HepG2 (cell line): ENCODE measurements at regions of chr1 and their contacts with region 1.

Region 1: GRCh38 chr1:110203021-110203661 is 7.0 kb upstream of the KCNC4 start:
- DNase-seq: peak; percentile 50
- ATAC-seq: peak; percentile 50
- H3K4me3 ChIP-seq: no peak overlapping the region
- H3K27ac ChIP-seq: no peak overlapping the region
- H3K4me1 ChIP-seq: no peaks in the 10 kb centered on the region
- H3K27me3 ChIP-seq: peaks cover 3 to 30% of the 10 kb centered on the region in 2 experiments; a peak in 3 of 5 replicates
- CTCF ChIP-seq: peak; percentile 87
- EP300 ChIP-seq: no peak
- POLR2A ChIP-seq: no peak
- RAD21 ChIP-seq: peak; percentile 49; the same call in 1 of the 2 replicates

Region 2: DNA sequence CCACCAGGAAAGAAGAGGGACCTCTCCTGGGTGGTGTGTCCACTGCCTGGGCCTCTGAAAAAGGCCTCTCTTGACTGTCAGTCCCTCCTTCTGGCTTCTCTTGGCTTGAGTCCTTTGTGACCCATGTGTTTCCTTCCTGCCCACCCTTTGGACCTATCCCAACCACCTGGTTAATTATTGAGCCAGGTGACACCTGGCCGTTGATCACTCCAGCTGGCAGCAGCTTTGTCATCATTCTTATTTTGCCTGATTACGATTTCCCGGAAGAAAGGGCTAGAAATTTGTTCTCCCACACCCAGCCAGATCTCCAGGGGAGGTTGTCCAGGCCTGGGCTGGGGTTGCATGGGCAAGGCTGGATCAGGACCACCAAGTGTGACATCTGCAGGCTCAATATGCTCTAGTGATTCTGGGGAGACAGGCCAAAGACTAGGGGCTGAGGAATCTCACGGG is 267.7 kb before region 1 on chr1:
- CTCF ChIA-PET with region 1: no interaction called
- POLR2A ChIA-PET with region 1: no interaction called
- in situ Hi-C with region 1: no loop called
- intact Hi-C with region 1: no loop called
- DNase-seq: peak; percentile 71
- ATAC-seq: peak; percentile 65
- H3K4me3 ChIP-seq: peak overlapping the region; percentile 9 to 56 (median 10); a peak in 3 of 6 replicates
- H3K27ac ChIP-seq: peak overlapping the region; percentile 76
- H3K4me1 ChIP-seq: peaks cover 64% of the 10 kb centered on the region
- H3K27me3 ChIP-seq: no peaks in the 10 kb centered on the region
- CTCF ChIP-seq: peak; percentile 28; the same call in 1 of the 2 replicates
- EP300 ChIP-seq: peak in 1 of 2 experiments; percentile 63; a peak in 2 of 4 replicates
- POLR2A ChIP-seq: peak; percentile 55 to 60; a peak in 2 of 4 replicates
- RAD21 ChIP-seq: no peak

Region 3: DNA sequence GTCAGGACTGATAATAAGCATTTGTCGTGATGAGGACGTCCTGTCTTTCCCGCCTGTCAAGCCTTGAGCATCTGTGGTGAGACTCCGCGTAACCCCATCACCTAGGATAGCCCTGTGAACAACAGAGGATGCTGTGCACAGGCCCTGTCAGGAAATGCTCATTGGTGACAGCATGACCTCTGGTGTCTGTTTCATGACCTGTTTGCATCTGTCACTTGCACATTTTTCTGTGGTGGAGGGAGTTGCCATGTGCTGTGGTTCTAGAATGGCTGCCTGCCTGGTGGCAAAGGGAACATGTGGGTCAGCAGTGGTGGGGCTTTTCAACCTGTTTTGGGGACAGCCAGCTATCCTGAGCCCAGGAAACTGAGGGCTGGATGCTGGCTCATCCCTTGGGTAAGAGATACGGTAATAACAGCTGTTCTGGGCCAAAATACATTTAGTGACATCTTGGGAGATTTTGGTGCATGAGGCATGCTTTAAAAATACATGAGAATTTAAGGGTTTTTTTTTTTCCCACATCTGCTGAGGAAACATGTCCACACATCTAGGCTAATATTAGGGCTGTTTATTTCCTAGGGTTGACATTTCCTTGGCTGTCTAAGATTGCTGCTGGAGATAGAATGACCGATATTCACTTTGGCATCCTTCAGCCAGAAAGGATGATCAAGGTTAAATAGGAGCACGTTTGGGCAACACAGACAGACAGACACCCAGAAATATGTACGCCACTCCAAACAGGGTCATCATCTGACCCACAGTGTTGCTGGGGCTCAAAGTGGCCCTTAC is 59.9 kb after region 1 on chr1:
- CTCF ChIA-PET with region 1: no interaction called
- POLR2A ChIA-PET with region 1: no interaction called
- in situ Hi-C with region 1: no loop called
- intact Hi-C with region 1: no loop called
- DNase-seq: no peak
- ATAC-seq: no peak
- H3K4me3 ChIP-seq: no peak overlapping the region
- H3K27ac ChIP-seq: no peak overlapping the region
- H3K4me1 ChIP-seq: no peaks in the 10 kb centered on the region
- H3K27me3 ChIP-seq: peaks cover 0 to 36% of the 10 kb centered on the region in 2 experiments; a peak in 3 of 5 replicates
- CTCF ChIP-seq: no peak
- EP300 ChIP-seq: no peak
- POLR2A ChIP-seq: no peak
- RAD21 ChIP-seq: no peak

Region 4: DNA sequence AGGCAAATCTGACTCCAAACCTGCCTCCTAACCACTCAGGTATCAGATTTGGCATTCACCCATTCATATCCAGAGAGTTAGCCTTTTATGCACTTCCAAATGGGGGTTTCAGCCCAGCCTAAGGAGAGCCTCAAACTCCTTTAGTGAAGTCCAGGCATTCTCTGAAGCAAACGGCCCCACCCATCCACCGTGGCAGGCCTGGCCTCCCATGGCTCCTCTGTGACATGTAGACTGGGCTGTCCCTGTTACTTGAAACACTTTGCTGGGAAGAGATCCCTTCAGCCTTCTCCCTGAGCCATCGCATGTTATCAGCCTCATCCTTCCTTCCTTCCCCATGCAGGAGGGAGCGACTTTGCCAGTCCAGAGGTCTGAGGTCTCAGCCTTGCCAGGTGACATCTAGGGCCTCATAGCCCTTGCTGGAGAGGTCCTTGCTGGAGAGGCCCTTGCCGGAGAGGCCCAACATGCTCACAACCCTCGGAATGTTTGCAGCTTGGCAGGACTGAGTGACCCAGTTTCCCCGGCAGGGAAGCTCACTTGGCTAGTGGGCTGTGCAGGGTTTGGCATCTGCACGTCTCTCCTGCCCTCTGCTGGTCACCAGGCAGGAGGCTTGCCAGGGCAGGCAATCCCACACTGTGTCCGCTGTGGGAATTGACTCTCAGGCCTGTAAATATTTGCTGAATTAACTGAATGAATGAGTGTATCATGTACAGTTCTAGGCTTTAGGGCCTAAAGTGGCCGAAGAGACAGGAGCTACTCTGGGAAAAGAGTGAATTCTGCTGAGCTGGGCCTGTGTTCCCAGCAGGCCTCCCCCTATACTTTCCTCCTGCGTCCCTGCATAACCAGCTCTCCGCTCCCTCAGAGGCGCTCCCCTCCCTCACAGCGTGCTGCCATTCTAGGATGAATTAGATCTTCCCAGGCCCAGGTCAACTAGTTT is 109.3 kb after region 1 on chr1:
- CTCF ChIA-PET with region 1: interaction called, 57 read pairs
- POLR2A ChIA-PET with region 1: interaction called, 3 read pairs
- in situ Hi-C with region 1: loop called (anchors 5 kb)
- intact Hi-C with region 1: loop called (anchors 1 kb)
- DNase-seq: peak; percentile 59
- ATAC-seq: peak; percentile 99
- H3K4me3 ChIP-seq: peak overlapping the region in 1 of 3 experiments; percentile 4; a peak in 1 of 6 replicates
- H3K27ac ChIP-seq: no peak overlapping the region
- H3K4me1 ChIP-seq: peaks cover 8% of the 10 kb centered on the region; the same call in 1 of the 2 replicates
- H3K27me3 ChIP-seq: peaks cover 0 to 5% of the 10 kb centered on the region in 2 experiments; a peak in 2 of 5 replicates
- CTCF ChIP-seq: peak; percentile 97
- EP300 ChIP-seq: no peak
- POLR2A ChIP-seq: no peak
- RAD21 ChIP-seq: peak; percentile 94

Region 5: DNA sequence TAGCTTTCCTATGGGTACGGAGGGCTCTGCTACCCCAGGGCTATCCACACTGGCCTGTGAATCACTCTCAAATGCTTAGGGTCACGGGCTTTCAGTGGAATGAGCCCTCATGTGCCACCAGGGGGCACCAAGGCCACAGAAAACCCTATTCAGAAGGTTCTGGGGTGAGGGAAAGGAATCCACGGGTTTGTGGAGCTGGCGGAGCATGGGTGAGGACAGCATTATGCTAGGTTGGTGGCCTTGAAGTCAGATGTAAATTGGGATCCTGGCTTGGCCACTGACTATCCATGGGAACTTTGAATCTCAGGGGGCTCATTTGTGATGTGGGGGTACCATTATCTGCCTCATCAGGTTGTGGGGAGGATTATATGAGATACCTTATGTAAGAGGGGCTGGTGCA is 209.4 kb after region 1 on chr1:
- CTCF ChIA-PET with region 1: interaction called, 5 read pairs
- POLR2A ChIA-PET with region 1: no interaction called
- in situ Hi-C with region 1: no loop called
- intact Hi-C with region 1: loop called (anchors 1 kb)
- DNase-seq: peak; percentile 69
- ATAC-seq: peak; percentile 89
- H3K4me3 ChIP-seq: no peak overlapping the region
- H3K27ac ChIP-seq: no peak overlapping the region
- H3K4me1 ChIP-seq: peaks cover 13% of the 10 kb centered on the region
- H3K27me3 ChIP-seq: no peaks in the 10 kb centered on the region; a peak in 1 of 5 replicates
- CTCF ChIP-seq: peak; percentile 90
- EP300 ChIP-seq: no peak
- POLR2A ChIP-seq: no peak
- RAD21 ChIP-seq: peak; percentile 71

Region 6: DNA sequence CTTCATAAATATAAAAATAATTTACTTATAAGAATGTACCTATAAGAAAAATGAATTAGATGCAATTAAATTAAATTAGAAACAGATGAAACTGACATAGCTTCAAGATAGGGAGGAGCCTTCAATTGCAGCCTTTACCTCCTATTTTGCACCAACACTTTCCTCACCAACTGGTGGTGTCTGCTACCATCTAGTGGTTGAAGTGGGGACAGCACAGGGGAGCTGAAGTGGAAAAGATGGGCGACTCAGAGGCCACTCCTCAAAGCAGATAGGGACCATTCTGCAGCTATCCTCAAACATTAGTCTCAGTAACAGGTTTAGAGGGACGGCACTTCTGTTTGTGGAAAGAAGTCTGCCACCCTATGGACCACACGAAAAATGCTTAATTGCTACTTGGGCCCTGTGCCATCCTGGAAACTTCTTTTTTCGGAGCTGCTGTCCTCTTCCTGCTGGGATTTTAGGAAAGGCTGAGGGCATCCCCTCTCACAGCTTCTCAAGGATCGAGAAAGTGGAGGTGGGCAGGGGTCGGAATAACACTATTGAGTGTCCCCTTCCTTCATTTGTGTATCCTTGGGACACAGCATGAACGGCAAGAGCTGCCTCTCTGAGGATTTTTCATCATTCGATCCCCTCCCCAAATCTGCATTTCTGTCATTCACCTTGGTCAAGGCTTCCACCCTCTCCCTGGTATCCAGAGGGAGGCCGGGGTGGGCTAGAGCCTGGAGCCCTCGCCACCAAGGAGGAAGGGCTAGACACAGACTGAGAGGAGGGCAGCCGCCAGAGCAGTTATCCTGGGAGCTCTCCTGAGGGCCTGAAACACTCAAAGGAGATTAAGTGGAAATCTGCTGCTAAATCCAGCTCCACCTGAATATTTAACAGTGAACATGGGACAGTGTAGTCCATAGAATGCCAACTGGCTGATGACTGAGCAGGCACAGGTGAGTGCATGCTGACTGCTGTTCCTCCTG is 257.4 kb after region 1 on chr1:
- CTCF ChIA-PET with region 1: interaction called, 15 read pairs
- POLR2A ChIA-PET with region 1: interaction called, 4 read pairs
- in situ Hi-C with region 1: loop called (anchors 5 kb)
- intact Hi-C with region 1: loop called (anchors 1 kb)
- DNase-seq: peak; percentile 69
- ATAC-seq: peak; percentile 78
- H3K4me3 ChIP-seq: no peak overlapping the region
- H3K27ac ChIP-seq: no peak overlapping the region
- H3K4me1 ChIP-seq: 0 out of 2 replicates have a peak, but pooled peaks cover 7% of the 10 kb centered on the region
- H3K27me3 ChIP-seq: peaks cover 0 to 4% of the 10 kb centered on the region in 2 experiments; a peak in 1 of 5 replicates
- CTCF ChIP-seq: peak; percentile 91
- EP300 ChIP-seq: no peak
- POLR2A ChIP-seq: no peak
- RAD21 ChIP-seq: peak; percentile 84

Region 7: GRCh38 chr1:110495926-110496600 is 292.9 kb after region 1 on chr1:
- CTCF ChIA-PET with region 1: interaction called, 7 read pairs
- POLR2A ChIA-PET with region 1: no interaction called
- in situ Hi-C with region 1: loop called (anchors 10 kb)
- intact Hi-C with region 1: loop called (anchors 1 kb)
- DNase-seq: peak; percentile 56
- ATAC-seq: peak; percentile 94
- H3K4me3 ChIP-seq: no peak overlapping the region
- H3K27ac ChIP-seq: no peak overlapping the region
- H3K4me1 ChIP-seq: no peaks in the 10 kb centered on the region
- H3K27me3 ChIP-seq: no peaks in the 10 kb centered on the region; a peak in 1 of 5 replicates
- CTCF ChIP-seq: peak; percentile 87
- EP300 ChIP-seq: no peak
- POLR2A ChIP-seq: no peak
- RAD21 ChIP-seq: peak; percentile 86